Psoas muscle (tissue), 8 donors: ENCODE measurements at regions of chr16 and their contacts with region 1.

Region 1: GRCh38 chr16:22898874-22899348 is 84.9 kb downstream of the HS3ST2 start:
- DNase-seq: peak; percentile 60 to 82
- ATAC-seq: peak; percentile 84 to 93 (median 88)
- H3K4me3 ChIP-seq: no peak overlapping the region
- H3K27ac ChIP-seq: no peak overlapping the region
- H3K4me1 ChIP-seq: no peaks in the 10 kb centered on the region
- H3K27me3 ChIP-seq: peaks cover 0 to 14% (median 3%) of the 10 kb centered on the region in 3 donors
- CTCF ChIP-seq: peak; percentile 84

Region 2: DNA sequence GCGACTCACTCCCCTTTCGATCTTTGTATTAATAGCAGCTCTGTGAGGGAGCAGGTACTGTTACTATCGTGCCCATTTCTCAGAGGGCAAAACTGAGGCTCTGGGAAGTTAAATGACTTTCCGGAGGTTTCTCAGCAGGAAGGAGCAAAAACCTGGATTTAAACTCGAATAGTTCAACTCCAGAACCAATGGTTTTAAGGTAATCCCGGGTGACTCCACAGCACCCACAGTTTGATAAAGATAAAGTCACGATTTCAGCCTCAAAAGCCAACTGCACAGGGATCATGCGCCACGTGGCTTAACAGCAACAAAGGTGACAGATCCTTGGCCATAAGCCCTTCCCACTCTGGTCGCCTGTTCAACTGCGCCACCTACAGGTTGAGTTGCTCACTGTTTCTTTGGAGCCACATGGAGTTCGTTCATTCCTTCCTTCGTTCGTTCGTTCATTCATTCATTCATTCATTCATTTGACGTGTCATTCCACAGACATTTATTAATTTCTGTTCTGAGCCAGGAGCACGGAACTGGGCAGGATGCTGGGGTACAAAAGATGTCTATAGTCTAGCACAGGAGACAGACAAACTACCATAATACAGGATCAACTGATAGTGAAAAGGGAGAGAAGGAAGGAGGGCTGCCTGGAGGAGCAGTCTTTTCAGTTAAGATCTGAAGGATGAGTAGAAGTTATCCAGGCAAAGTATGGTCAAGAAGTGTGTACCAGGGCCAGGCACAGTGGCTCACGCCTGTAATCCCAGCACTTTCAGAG is 49.9 kb after region 1 on chr16:
- intact Hi-C with region 1: loop called in 1 of 2 experiments (anchors 2 kb)
- DNase-seq: peak; percentile 51 to 72
- ATAC-seq: peak; percentile 81 to 94 (median 91)
- H3K4me3 ChIP-seq: peak overlapping the region; percentile 8
- H3K27ac ChIP-seq: no peak overlapping the region
- H3K4me1 ChIP-seq: peaks cover 8% of the 10 kb centered on the region
- H3K27me3 ChIP-seq: peaks cover 0 to 9% (median 3%) of the 10 kb centered on the region in 3 donors
- CTCF ChIP-seq: peak; percentile 75

Region 3: GRCh38 chr16:22977294-22977697 is 78.4 kb after region 1 on chr16:
- intact Hi-C with region 1: loop called in 1 of 2 experiments (anchors 5 kb)
- DNase-seq: no peak
- ATAC-seq: peak in 2 of 4 donors; percentile 37 to 53
- H3K4me3 ChIP-seq: no peak overlapping the region
- H3K27ac ChIP-seq: no peak overlapping the region
- H3K4me1 ChIP-seq: no peaks in the 10 kb centered on the region
- H3K27me3 ChIP-seq: no peaks in the 10 kb centered on the region
- CTCF ChIP-seq: peak; percentile 34

Region 4: GRCh38 chr16:22989598-22989997 is 90.7 kb after region 1 on chr16:
- intact Hi-C with region 1: no loop called
- DNase-seq: no peak
- ATAC-seq: no peak
- H3K4me3 ChIP-seq: no peak overlapping the region
- H3K27ac ChIP-seq: no peak overlapping the region
- H3K4me1 ChIP-seq: no peaks in the 10 kb centered on the region
- H3K27me3 ChIP-seq: no peaks in the 10 kb centered on the region
- CTCF ChIP-seq: no peak

Region 5: GRCh38 chr16:23060458-23061320 is 161.8 kb after region 1 on chr16:
- intact Hi-C with region 1: loop called (anchors 2 to 5 kb)
- DNase-seq: peak; percentile 53 to 62
- ATAC-seq: peak; percentile 82 to 92 (median 86)
- H3K4me3 ChIP-seq: no peak overlapping the region
- H3K27ac ChIP-seq: no peak overlapping the region
- H3K4me1 ChIP-seq: no peaks in the 10 kb centered on the region
- H3K27me3 ChIP-seq: peaks cover 0 to 12% (median 0%) of the 10 kb centered on the region in 3 donors
- CTCF ChIP-seq: peak; percentile 81